B cell (primary cell): ENCODE measurements at regions of chr3 and their contacts with region 1.

Region 1: GRCh38 chr3:42502429-42503250 is at the start of gene VIPR1:
- DNase-seq: peak; percentile 92
- ATAC-seq: peak; percentile 98
- H3K4me3 ChIP-seq: peak within 1 kb of the TSS; percentile 58 to 82 (median 72)
- H3K4me3 Mint-ChIP-seq: peak within 1 kb of the TSS; percentile 92
- H3K27ac ChIP-seq: no peak within 1 kb of the TSS
- H3K27ac Mint-ChIP-seq: peak within 1 kb of the TSS; percentile 84
- H3K4me1 ChIP-seq: peaks cover 11 to 21% of the 10 kb centered on the region in 2 donors
- H3K4me1 Mint-ChIP-seq: peaks cover 25% of the 10 kb centered on the region
- H3K27me3 ChIP-seq: peaks cover 0 to 38% (median 16%) of the 10 kb centered on the region in 4 experiments
- H3K27me3 Mint-ChIP-seq: peaks cover 32% of the 10 kb centered on the region
- CTCF ChIP-seq: no peak
- total RNA-seq, gene VIPR1: 5.8 and 8.3 TPM in 2 replicates

Region 2: GRCh38 chr3:42012935-42013690 is 489.5 kb before region 1 on chr3:
- CTCF ChIA-PET with region 1: no interaction called
- POLR2A ChIA-PET with region 1: no interaction called
- intact Hi-C with region 1: loop called (anchors 2 kb)
- DNase-seq: peak; percentile 92
- ATAC-seq: peak; percentile 71
- H3K4me3 ChIP-seq: peak overlapping the region; percentile 60 to 96 (median 92)
- H3K4me3 Mint-ChIP-seq: peak overlapping the region; percentile 97
- H3K27ac ChIP-seq: peak overlapping the region; percentile 99 to 100
- H3K27ac Mint-ChIP-seq: peak overlapping the region; percentile 99
- H3K4me1 ChIP-seq: peaks cover 44 to 49% of the 10 kb centered on the region in 2 donors
- H3K4me1 Mint-ChIP-seq: peaks cover 56% of the 10 kb centered on the region
- H3K27me3 ChIP-seq: no peaks in the 10 kb centered on the region
- H3K27me3 Mint-ChIP-seq: no peaks in the 10 kb centered on the region
- CTCF ChIP-seq: no peak

Region 3: GRCh38 chr3:42490243-42490642 is 12.4 kb before region 1 on chr3:
- CTCF ChIA-PET with region 1: interaction called, 24 read pairs
- POLR2A ChIA-PET with region 1: interaction called, 8 read pairs
- intact Hi-C with region 1: loop called (anchors 1 kb)
- DNase-seq: peak; percentile 55
- ATAC-seq: peak; percentile 92
- H3K4me3 ChIP-seq: no peak overlapping the region
- H3K4me3 Mint-ChIP-seq: peak overlapping the region; percentile 81
- H3K27ac ChIP-seq: peak overlapping the region; percentile 49
- H3K27ac Mint-ChIP-seq: peak overlapping the region; percentile 94
- H3K4me1 ChIP-seq: peaks cover 36 to 49% of the 10 kb centered on the region in 2 donors
- H3K4me1 Mint-ChIP-seq: peaks cover 52% of the 10 kb centered on the region
- H3K27me3 ChIP-seq: no peaks in the 10 kb centered on the region
- H3K27me3 Mint-ChIP-seq: no peaks in the 10 kb centered on the region
- CTCF ChIP-seq: no peak

Region 4: GRCh38 chr3:42547401-42547945 is 44.8 kb after region 1 on chr3:
- CTCF ChIA-PET with region 1: interaction called, 56 read pairs
- POLR2A ChIA-PET with region 1: no interaction called
- intact Hi-C with region 1: loop called (anchors 2 kb)
- DNase-seq: peak; percentile 74
- ATAC-seq: peak; percentile 53
- H3K4me3 ChIP-seq: no peak overlapping the region
- H3K4me3 Mint-ChIP-seq: no peak overlapping the region
- H3K27ac ChIP-seq: no peak overlapping the region
- H3K27ac Mint-ChIP-seq: no peak overlapping the region
- H3K4me1 ChIP-seq: no peaks in the 10 kb centered on the region
- H3K4me1 Mint-ChIP-seq: no peaks in the 10 kb centered on the region
- H3K27me3 ChIP-seq: no peaks in the 10 kb centered on the region
- H3K27me3 Mint-ChIP-seq: no peaks in the 10 kb centered on the region
- CTCF ChIP-seq: peak; percentile 97

Region 5: GRCh38 chr3:42772670-42773408 is 270.2 kb after region 1 on chr3 and contains the start of gene CCDC13:
- CTCF ChIA-PET with region 1: no interaction called
- POLR2A ChIA-PET with region 1: no interaction called
- intact Hi-C with region 1: loop called (anchors 1 kb)
- DNase-seq: peak; percentile 98
- ATAC-seq: peak; percentile 88
- H3K4me3 ChIP-seq: peak within 1 kb of the TSS; percentile 46 to 87 (median 62)
- H3K4me3 Mint-ChIP-seq: peak within 1 kb of the TSS; percentile 90
- H3K27ac ChIP-seq: peak within 1 kb of the TSS; percentile 66 to 81
- H3K27ac Mint-ChIP-seq: peak within 1 kb of the TSS; percentile 92
- H3K4me1 ChIP-seq: peaks cover 4 to 10% of the 10 kb centered on the region in 2 donors
- H3K4me1 Mint-ChIP-seq: peaks cover 11% of the 10 kb centered on the region
- H3K27me3 ChIP-seq: no peaks in the 10 kb centered on the region
- H3K27me3 Mint-ChIP-seq: no peaks in the 10 kb centered on the region
- CTCF ChIP-seq: no peak
- total RNA-seq, gene CCDC13: 1.9 and 2.5 TPM in 2 replicates